ENCODE measurements at regions of chr9 and their contacts with region 1.

Region 1: GRCh38 chr9:124617471-124618141 is 110.4 kb upstream of the NR5A1 start:
- DNase-seq: peak; percentile 78 to 87
- ATAC-seq: peak; percentile 98 to 99
- H3K4me3 ChIP-seq: no peak overlapping the region
- H3K27ac ChIP-seq: peak overlapping the region; percentile 28 to 70; a peak in 4 of 6 replicates
- H3K4me1 ChIP-seq: peaks cover 15% of the 10 kb centered on the region
- CTCF ChIP-seq: peak; percentile 96
- EP300 ChIP-seq: no peak
- POLR2A ChIP-seq: no peak
- RAD21 ChIP-seq: peak; percentile 95 to 98

Region 2: GRCh38 chr9:124381170-124381945 is 236.2 kb before region 1 on chr9:
- CTCF ChIA-PET with region 1: no interaction called
- POLR2A ChIA-PET with region 1: no interaction called
- DNase-seq: no peak
- ATAC-seq: no peak
- H3K4me3 ChIP-seq: no peak overlapping the region
- H3K27ac ChIP-seq: no peak overlapping the region
- H3K4me1 ChIP-seq: peaks cover 9% of the 10 kb centered on the region
- CTCF ChIP-seq: no peak
- EP300 ChIP-seq: no peak
- POLR2A ChIP-seq: no peak
- RAD21 ChIP-seq: no peak

Region 3: GRCh38 chr9:124447297-124447661 is 170.3 kb before region 1 on chr9:
- CTCF ChIA-PET with region 1: no interaction called
- POLR2A ChIA-PET with region 1: no interaction called
- DNase-seq: no peak
- ATAC-seq: no peak
- H3K4me3 ChIP-seq: no peak overlapping the region
- H3K27ac ChIP-seq: no peak overlapping the region
- H3K4me1 ChIP-seq: no peaks in the 10 kb centered on the region; the same call in 2 of the 3 replicates
- CTCF ChIP-seq: no peak
- EP300 ChIP-seq: no peak
- POLR2A ChIP-seq: no peak
- RAD21 ChIP-seq: no peak

Region 4: GRCh38 chr9:124457887-124458431 is 159.6 kb before region 1 on chr9:
- CTCF ChIA-PET with region 1: no interaction called
- POLR2A ChIA-PET with region 1: no interaction called
- DNase-seq: no peak
- ATAC-seq: no peak
- H3K4me3 ChIP-seq: no peak overlapping the region
- H3K27ac ChIP-seq: no peak overlapping the region
- H3K4me1 ChIP-seq: peaks cover 2% of the 10 kb centered on the region; the same call in 2 of the 3 replicates
- CTCF ChIP-seq: no peak
- EP300 ChIP-seq: no peak
- POLR2A ChIP-seq: no peak
- RAD21 ChIP-seq: no peak

Region 5: DNA sequence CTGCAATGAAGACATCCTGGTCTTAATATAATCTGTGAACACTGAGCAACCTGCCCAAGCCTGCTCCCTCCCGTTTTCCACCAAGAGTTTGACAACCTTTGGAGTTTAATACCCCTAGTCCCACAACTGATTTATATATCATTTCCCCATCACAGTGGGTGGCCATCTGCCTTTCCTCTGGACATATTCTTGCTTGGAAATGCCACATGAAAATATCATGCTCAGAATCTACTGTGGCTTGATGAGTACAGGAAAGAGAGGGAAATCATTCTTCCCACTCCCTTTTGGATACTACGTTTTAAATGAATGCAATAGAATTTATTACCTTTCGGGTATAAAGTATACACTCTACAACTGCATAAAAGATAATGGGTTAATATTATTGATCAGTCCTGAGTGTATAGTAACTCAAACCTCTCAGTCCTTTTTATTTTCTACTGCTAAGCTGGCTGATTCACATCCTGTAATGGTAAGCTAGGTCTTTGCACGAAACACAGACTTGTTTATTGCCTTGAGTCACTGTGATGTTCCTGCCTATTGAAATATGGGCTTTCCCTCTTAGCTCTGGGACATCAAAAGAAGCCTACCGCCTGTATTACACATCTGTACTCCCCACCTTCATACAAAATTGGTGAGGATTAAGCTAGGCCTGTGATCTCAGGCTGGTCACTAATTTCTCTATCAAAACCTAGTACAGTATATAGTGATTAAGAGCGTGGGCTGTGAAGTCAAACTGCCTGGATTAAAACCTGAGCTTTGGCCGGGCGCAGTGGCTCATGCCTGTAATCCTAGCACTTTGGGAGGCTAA is 42.9 kb before region 1 on chr9:
- CTCF ChIA-PET with region 1: interaction called, 14 read pairs
- POLR2A ChIA-PET with region 1: no interaction called
- DNase-seq: peak in 1 of 2 experiments; percentile 20
- ATAC-seq: peak; percentile 47 to 57; a peak in 2 of 6 replicates
- H3K4me3 ChIP-seq: no peak overlapping the region
- H3K27ac ChIP-seq: no peak overlapping the region
- H3K4me1 ChIP-seq: peaks cover 18% of the 10 kb centered on the region; the same call in 2 of the 3 replicates
- CTCF ChIP-seq: no peak
- EP300 ChIP-seq: no peak
- POLR2A ChIP-seq: no peak
- RAD21 ChIP-seq: no peak

Region 6: GRCh38 chr9:124629600-124629999 is 12.0 kb after region 1 on chr9:
- CTCF ChIA-PET with region 1: interaction called, 30 read pairs
- POLR2A ChIA-PET with region 1: no interaction called
- DNase-seq: no peak
- ATAC-seq: no peak; a peak in 1 of 6 replicates
- H3K4me3 ChIP-seq: no peak overlapping the region
- H3K27ac ChIP-seq: no peak overlapping the region
- H3K4me1 ChIP-seq: peaks cover 15% of the 10 kb centered on the region
- CTCF ChIP-seq: no peak
- EP300 ChIP-seq: no peak
- POLR2A ChIP-seq: no peak
- RAD21 ChIP-seq: no peak

Region 7: DNA sequence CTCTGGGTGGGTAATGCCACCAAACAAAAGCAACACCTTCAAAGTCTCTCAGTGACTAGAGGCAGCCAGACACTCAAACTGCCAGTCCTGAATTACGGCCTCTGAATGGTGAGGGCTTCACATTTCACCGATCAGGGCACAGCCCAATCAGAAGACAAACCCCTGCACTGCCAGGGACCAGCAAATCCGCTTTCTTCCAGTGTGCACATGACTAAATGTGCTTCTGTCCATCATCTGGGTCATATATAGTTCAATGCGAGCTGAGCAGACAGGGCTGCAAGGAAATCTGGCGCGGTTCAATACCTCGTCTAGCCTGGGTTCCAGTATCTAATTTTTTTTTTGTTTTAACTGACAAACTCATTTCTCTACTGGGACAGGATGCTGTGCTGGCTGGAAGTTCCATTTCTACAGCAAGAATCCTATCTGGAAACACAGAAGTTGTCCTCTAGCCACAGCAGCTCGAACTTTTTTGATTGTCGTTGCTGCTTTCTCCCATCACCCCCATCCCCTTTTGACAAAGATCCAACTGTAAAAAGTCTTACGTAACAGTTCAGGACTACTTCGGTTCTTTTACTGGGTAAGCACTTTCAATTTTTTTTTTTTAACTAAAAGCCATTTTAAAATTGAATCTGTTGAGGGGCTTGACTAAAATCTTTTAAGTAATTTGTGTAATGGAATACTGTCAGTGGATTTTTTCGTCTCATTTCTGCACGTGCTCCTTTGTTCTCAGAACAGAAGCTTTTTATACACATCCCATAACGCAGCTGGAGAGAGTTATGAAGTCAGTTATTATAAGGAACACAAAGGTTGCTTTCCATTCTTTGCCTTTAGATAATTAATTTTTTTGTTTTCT is 40.8 kb after region 1 on chr9:
- CTCF ChIA-PET with region 1: interaction called, 37 read pairs
- POLR2A ChIA-PET with region 1: interaction called, 7 read pairs
- DNase-seq: peak; percentile 95 to 97
- ATAC-seq: peak; percentile 95 to 96
- H3K4me3 ChIP-seq: peak overlapping the region; percentile 68
- H3K27ac ChIP-seq: peak overlapping the region; percentile 86 to 88
- H3K4me1 ChIP-seq: peaks cover 35% of the 10 kb centered on the region
- CTCF ChIP-seq: no peak
- EP300 ChIP-seq: no peak
- POLR2A ChIP-seq: peak; percentile 77
- RAD21 ChIP-seq: no peak

Region 8: DNA sequence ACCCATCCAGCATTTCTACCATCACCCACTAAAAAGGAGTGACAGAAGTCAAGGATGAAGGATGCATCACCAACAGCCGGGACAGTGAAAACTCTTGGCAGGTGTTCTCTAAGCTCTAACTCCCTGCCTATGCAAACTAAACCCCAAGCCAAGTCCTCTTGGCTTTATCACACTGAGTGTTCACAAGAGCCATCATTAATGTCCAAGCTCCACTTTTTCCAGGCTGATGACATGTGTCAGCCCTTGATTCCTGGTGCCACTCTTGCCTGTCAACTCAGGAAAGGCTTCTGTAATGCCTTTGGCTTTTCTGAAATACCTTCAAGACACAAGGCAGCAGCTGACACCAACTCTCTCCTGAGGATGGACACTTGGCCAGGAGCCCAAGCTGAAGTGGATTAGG is 66.6 kb after region 1 on chr9:
- CTCF ChIA-PET with region 1: interaction called, 16 read pairs
- POLR2A ChIA-PET with region 1: no interaction called
- DNase-seq: no peak
- ATAC-seq: no peak
- H3K4me3 ChIP-seq: no peak overlapping the region
- H3K27ac ChIP-seq: no peak overlapping the region
- H3K4me1 ChIP-seq: no peaks in the 10 kb centered on the region
- CTCF ChIP-seq: no peak
- EP300 ChIP-seq: no peak
- POLR2A ChIP-seq: no peak
- RAD21 ChIP-seq: no peak

Region 9: DNA sequence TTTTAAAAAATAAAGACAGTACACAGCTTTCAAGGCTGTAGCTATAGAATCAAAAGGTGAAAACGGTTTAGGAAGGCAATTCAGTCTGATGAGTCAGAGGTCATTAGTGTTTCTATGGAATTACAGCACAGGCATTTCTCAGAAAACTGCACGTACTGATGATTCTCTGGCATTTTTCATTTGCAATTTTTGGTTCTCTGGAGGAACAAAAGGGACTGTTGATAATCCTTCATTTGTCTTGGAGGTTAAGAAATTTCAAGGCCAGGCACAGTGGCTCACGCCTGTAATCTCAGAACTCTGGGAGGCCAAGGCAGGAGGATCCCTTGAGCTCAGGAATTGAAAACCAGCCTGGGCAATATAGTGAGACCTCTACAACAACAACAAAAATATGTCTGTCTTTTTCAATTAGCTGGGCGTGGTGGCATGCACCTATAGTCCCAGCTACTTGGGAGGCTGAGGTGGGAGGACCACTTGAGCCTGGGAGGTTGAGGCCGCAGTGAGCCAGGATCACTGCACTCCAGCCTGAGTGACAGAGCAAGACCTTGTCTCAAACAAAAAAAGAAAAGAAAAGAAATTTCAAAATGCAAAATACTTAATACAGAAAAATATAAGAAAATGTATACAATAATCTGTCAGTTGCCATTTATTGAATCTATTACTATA is 126.2 kb after region 1 on chr9:
- CTCF ChIA-PET with region 1: interaction called, 19 read pairs
- POLR2A ChIA-PET with region 1: no interaction called
- DNase-seq: no peak
- ATAC-seq: no peak
- H3K4me3 ChIP-seq: no peak overlapping the region
- H3K27ac ChIP-seq: no peak overlapping the region
- H3K4me1 ChIP-seq: peaks cover 8% of the 10 kb centered on the region; the same call in 2 of the 3 replicates
- CTCF ChIP-seq: no peak
- EP300 ChIP-seq: no peak
- POLR2A ChIP-seq: no peak
- RAD21 ChIP-seq: no peak

Region 10: GRCh38 chr9:124771021-124771866 is 153.6 kb after region 1 on chr9 and contains the start of gene NR6A1:
- CTCF ChIA-PET with region 1: interaction called, 17 read pairs
- POLR2A ChIA-PET with region 1: no interaction called
- DNase-seq: peak; percentile 97 to 98
- ATAC-seq: peak; percentile 81 to 88
- H3K4me3 ChIP-seq: peak within 1 kb of the TSS; percentile 94
- H3K27ac ChIP-seq: peak within 1 kb of the TSS; percentile 82 to 95
- H3K4me1 ChIP-seq: peaks cover 30% of the 10 kb centered on the region; the same call in 2 of the 3 replicates
- CTCF ChIP-seq: peak; percentile 38
- EP300 ChIP-seq: no peak
- POLR2A ChIP-seq: peak; percentile 24; the same call in 1 of the 2 replicates
- RAD21 ChIP-seq: no peak
- polyA plus RNA-seq, gene NR6A1: 3.3 and 4.1 TPM in 2 replicates

Region 11: GRCh38 chr9:125119643-125120286 is 502.2 kb after region 1 on chr9:
- CTCF ChIA-PET with region 1: no interaction called
- POLR2A ChIA-PET with region 1: no interaction called
- DNase-seq: no peak
- ATAC-seq: no peak
- H3K4me3 ChIP-seq: no peak overlapping the region
- H3K27ac ChIP-seq: no peak overlapping the region
- H3K4me1 ChIP-seq: no peaks in the 10 kb centered on the region
- CTCF ChIP-seq: no peak
- EP300 ChIP-seq: no peak
- POLR2A ChIP-seq: no peak
- RAD21 ChIP-seq: no peak